ENCODE measurements at regions of chr2 and their contacts with region 1.

Region 1: DNA sequence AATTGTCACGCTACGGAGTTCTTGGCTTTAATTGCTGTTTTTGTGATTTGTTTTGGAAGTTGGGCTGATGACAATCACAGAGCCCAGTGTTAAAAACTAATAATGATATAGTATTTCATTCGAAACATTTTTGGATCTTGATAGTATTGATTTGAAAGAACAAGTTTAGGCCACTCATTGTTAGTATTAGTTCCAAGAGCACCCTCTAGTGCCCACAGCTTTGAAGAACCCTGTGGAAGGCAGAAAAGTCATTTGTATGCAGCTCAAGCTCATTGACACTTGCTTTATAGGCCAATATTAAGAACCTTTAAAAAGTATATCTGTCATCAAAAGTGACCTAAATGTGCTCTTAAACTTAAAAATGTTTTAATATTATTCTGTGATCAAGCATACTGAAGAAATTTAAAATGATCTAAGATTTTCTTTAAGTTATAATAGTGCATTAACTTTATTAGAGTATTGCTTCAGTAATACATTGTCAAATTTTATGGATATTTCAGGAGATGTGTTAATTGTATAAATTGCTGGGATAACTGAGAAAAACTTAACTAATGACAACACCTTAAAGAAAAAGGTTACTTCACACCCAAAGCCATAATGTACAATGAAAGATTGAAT is 191.0 kb downstream of the GRB14 start:
- DNase-seq: peak; percentile 51
- H3K4me3 Mint-ChIP-seq: no peak overlapping the region
- H3K27ac Mint-ChIP-seq: no peak overlapping the region
- H3K4me1 Mint-ChIP-seq: no peaks in the 10 kb centered on the region
- H3K27me3 Mint-ChIP-seq: no peaks in the 10 kb centered on the region
- CTCF ChIP-seq: peak; percentile 43

Region 2: GRCh38 chr2:163155279-163155883 is 1274.9 kb before region 1 on chr2:
- CTCF ChIA-PET with region 1: no interaction called
- intact Hi-C with region 1: loop called (anchors 1 kb)
- DNase-seq: peak; percentile 19
- H3K4me3 Mint-ChIP-seq: no peak overlapping the region
- H3K27ac Mint-ChIP-seq: no peak overlapping the region
- H3K4me1 Mint-ChIP-seq: peaks cover 8% of the 10 kb centered on the region
- H3K27me3 Mint-ChIP-seq: no peaks in the 10 kb centered on the region
- CTCF ChIP-seq: no peak

Region 3: GRCh38 chr2:163471947-163472346 is 958.3 kb before region 1 on chr2:
- CTCF ChIA-PET with region 1: no interaction called
- intact Hi-C with region 1: loop called (anchors 10 kb)
- DNase-seq: peak; percentile 20
- H3K4me3 Mint-ChIP-seq: no peak overlapping the region
- H3K27ac Mint-ChIP-seq: no peak overlapping the region
- H3K4me1 Mint-ChIP-seq: peaks cover 8% of the 10 kb centered on the region
- H3K27me3 Mint-ChIP-seq: no peaks in the 10 kb centered on the region
- CTCF ChIP-seq: peak; percentile 34

Region 4: DNA sequence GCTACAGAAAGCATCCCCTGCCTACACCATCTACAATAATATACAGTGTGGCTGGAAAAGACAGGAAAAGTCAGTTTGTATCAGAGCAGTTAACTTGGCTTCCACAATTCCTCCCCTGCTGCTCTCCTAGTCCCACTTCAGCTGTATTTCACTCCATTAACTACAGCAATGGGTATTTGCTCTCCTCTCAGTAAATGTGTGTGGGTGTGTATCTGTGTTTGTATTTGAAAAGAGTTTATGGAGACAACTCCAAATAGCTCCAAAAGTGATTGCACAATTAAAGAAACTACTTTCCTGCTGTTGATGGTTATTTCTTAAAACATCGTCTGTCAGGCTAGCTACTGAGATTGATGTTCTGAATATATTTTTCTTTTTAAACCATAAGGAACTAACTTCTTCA is 360.7 kb before region 1 on chr2:
- CTCF ChIA-PET with region 1: no interaction called
- intact Hi-C with region 1: loop called (anchors 5 kb)
- DNase-seq: no peak
- H3K4me3 Mint-ChIP-seq: no peak overlapping the region
- H3K27ac Mint-ChIP-seq: no peak overlapping the region
- H3K4me1 Mint-ChIP-seq: no peaks in the 10 kb centered on the region
- H3K27me3 Mint-ChIP-seq: no peaks in the 10 kb centered on the region
- CTCF ChIP-seq: no peak

Region 5: GRCh38 chr2:164114931-164115330 is 315.3 kb before region 1 on chr2:
- CTCF ChIA-PET with region 1: no interaction called
- intact Hi-C with region 1: no loop called
- DNase-seq: peak; percentile 30
- H3K4me3 Mint-ChIP-seq: no peak overlapping the region
- H3K27ac Mint-ChIP-seq: no peak overlapping the region
- H3K4me1 Mint-ChIP-seq: no peaks in the 10 kb centered on the region
- H3K27me3 Mint-ChIP-seq: no peaks in the 10 kb centered on the region
- CTCF ChIP-seq: no peak

Region 6: GRCh38 chr2:164134336-164134735 is 295.9 kb before region 1 on chr2:
- CTCF ChIA-PET with region 1: no interaction called
- intact Hi-C with region 1: loop called (anchors 10 kb)
- DNase-seq: no peak
- H3K4me3 Mint-ChIP-seq: no peak overlapping the region
- H3K27ac Mint-ChIP-seq: no peak overlapping the region
- H3K4me1 Mint-ChIP-seq: no peaks in the 10 kb centered on the region
- H3K27me3 Mint-ChIP-seq: no peaks in the 10 kb centered on the region
- CTCF ChIP-seq: no peak

Region 7: GRCh38 chr2:164464376-164464775 is 34.1 kb after region 1 on chr2:
- CTCF ChIA-PET with region 1: no interaction called
- intact Hi-C with region 1: no loop called
- DNase-seq: no peak
- H3K4me3 Mint-ChIP-seq: no peak overlapping the region
- H3K27ac Mint-ChIP-seq: no peak overlapping the region
- H3K4me1 Mint-ChIP-seq: no peaks in the 10 kb centered on the region
- H3K27me3 Mint-ChIP-seq: peaks cover 9% of the 10 kb centered on the region
- CTCF ChIP-seq: no peak

Region 8: GRCh38 chr2:164479460-164479859 is 49.2 kb after region 1 on chr2:
- CTCF ChIA-PET with region 1: no interaction called
- intact Hi-C with region 1: no loop called
- DNase-seq: peak; percentile 49
- H3K4me3 Mint-ChIP-seq: no peak overlapping the region
- H3K27ac Mint-ChIP-seq: no peak overlapping the region
- H3K4me1 Mint-ChIP-seq: peaks cover 8% of the 10 kb centered on the region
- H3K27me3 Mint-ChIP-seq: no peaks in the 10 kb centered on the region
- CTCF ChIP-seq: peak; percentile 50

Region 9: DNA sequence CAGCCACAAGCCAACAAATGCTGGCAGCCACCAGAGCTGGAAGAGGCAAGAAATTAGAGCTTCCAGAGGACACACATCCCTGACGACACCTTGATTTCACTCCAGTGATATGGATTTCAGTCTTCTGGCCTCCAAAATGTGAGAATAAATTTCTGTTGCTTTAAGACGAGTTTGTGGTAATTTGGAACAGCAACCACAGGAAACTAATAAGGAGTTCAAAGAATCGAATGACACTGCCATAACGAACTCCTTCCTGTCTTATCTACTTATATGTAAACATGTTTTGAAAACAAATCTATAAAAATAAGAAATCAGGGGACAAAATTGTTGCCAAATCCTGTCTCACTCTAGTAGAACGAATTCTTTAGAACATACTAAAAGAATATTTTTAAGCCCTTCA is 115.2 kb after region 1 on chr2:
- CTCF ChIA-PET with region 1: no interaction called
- intact Hi-C with region 1: no loop called
- DNase-seq: no peak
- H3K4me3 Mint-ChIP-seq: no peak overlapping the region
- H3K27ac Mint-ChIP-seq: no peak overlapping the region
- H3K4me1 Mint-ChIP-seq: peaks cover 11% of the 10 kb centered on the region
- H3K27me3 Mint-ChIP-seq: no peaks in the 10 kb centered on the region
- CTCF ChIP-seq: no peak

Measured in Calu3 (cell line).